T-cell (primary cell): ENCODE measurements at regions of chr17 and their contacts with region 1.

Region 1: GRCh38 chr17:68161644-68162428 is 86.0 kb upstream of the AMZ2 start:
- DNase-seq: no peak
- ATAC-seq: no peak
- H3K4me3 ChIP-seq: no peak overlapping the region
- H3K4me3 Mint-ChIP-seq: no peak overlapping the region
- H3K27ac ChIP-seq: no peak overlapping the region
- H3K27ac Mint-ChIP-seq: no peak overlapping the region
- H3K4me1 ChIP-seq: peaks cover 0 to 2% of the 10 kb centered on the region in 2 experiments
- H3K4me1 Mint-ChIP-seq: peaks cover 0 to 7% (median 6%) of the 10 kb centered on the region in 3 donors
- H3K27me3 ChIP-seq: no peaks in the 10 kb centered on the region
- H3K27me3 Mint-ChIP-seq: no peaks in the 10 kb centered on the region

Region 2: DNA sequence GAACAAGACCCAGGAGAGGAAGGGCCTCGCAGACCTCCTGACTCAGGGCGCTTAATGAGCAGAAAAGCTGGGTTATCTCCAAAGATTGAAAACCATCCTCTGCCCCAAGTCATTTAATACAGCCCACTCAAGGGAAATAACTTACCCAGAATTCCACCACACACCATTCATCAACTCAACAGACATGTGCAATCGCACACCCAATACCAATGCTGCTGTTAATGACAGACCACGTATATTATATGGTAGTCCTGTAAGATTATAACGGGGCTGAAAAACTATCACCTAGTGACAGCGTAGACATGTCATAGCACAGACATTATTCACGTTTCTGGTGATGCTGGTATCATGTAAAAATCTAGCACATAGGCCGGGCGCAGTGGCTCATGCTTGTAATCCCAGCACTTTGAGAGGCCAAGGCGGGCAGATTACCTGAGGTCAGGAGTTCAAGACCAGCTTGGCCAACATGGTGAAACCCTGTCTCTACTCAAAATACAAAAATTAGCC is 864.3 kb before region 1 on chr17:
- CTCF ChIA-PET with region 1: no interaction called
- POLR2A ChIA-PET with region 1: no interaction called
- DNase-seq: no peak
- ATAC-seq: no peak
- H3K4me3 ChIP-seq: no peak overlapping the region
- H3K4me3 Mint-ChIP-seq: no peak overlapping the region
- H3K27ac ChIP-seq: no peak overlapping the region
- H3K27ac Mint-ChIP-seq: no peak overlapping the region
- H3K4me1 ChIP-seq: peaks cover 0 to 8% of the 10 kb centered on the region in 2 experiments
- H3K4me1 Mint-ChIP-seq: peaks cover 0 to 6% (median 0%) of the 10 kb centered on the region in 3 donors
- H3K27me3 ChIP-seq: peaks cover 0 to 2% of the 10 kb centered on the region in 2 experiments
- H3K27me3 Mint-ChIP-seq: no peaks in the 10 kb centered on the region

Region 3: DNA sequence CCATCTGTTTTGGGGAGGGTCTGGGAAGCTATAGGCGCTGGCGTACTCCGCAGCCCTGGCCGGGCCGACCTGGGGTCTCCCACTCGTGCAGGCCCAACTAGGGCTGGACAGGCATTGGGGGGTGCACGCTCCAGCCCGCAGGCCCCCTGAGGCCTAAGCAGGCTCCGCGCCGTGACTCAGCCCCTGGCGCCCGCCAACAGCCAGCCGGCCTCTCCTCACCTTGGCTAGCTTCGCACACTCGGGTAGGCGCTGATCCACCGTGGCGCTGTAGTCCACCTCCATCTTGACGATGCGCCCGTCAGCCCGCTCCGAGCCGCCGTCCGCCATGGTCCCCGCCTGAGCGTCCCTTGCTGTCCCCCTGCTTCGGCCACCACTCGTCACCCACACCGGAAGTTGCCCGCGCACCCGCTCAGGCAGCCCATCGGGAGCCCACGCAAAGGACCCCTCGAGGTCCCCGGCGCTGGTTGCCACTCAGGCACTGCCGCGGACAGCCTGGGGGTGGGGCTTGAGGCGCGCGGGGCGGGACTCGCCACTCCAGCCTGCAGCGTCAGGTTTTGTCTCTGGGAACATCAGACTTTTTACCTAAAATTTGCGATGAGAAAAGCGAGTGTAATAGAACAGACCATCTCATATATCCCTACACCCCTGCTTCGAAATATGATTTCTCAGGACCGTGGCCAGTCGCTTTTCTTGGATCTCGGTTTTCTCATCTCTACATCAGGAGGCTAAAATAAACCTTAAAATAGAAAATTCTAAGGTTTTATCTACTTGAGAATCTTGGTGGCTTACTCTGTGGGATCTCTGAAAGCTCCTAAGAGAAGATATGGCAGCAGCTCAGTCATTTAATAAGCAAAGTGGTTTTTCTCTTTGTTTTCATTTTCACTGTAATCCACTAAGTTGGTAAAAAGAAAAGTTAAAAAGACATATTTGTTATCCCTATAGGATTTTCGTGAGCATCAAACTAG is 795.4 kb before region 1 on chr17 and contains the start of gene PSMD12:
- CTCF ChIA-PET with region 1: interaction called in 1 of 2 experiments, 13 read pairs
- POLR2A ChIA-PET with region 1: no interaction called
- DNase-seq: peak; percentile 82 to 96 (median 89)
- ATAC-seq: peak; percentile 97 to 99 (median 98)
- H3K4me3 ChIP-seq: peak within 1 kb of the TSS; percentile 94 to 97
- H3K4me3 Mint-ChIP-seq: peak within 1 kb of the TSS; percentile 87 to 96 (median 92)
- H3K27ac ChIP-seq: peak within 1 kb of the TSS; percentile 94
- H3K27ac Mint-ChIP-seq: peak within 1 kb of the TSS; percentile 96 to 98
- H3K4me1 ChIP-seq: peaks cover 14 to 24% of the 10 kb centered on the region in 2 experiments
- H3K4me1 Mint-ChIP-seq: peaks cover 46 to 52% (median 48%) of the 10 kb centered on the region in 3 donors
- H3K27me3 ChIP-seq: no peaks in the 10 kb centered on the region
- H3K27me3 Mint-ChIP-seq: no peaks in the 10 kb centered on the region
- total RNA-seq, gene PSMD12: 28.1 to 49.9 (median 37.7) TPM

Region 4: DNA sequence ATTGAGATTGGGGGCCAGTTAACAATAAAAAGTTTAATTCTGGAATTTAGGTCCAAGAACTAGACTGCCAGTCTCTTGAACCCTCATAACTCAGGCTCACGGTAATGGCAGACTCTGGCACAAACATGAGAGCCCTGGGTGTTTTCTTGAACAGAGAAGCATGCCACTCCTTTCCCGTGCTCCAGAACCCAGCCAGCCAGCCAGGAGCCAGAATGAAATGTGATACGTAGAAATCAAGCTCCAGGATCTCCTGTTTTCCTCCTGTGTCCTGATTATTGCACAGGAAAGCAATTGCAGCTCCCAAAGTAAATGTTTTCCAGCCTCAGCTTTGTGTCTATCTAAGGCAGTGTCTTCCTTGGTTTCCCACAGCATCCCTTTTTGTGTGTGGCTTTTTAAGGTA is 490.3 kb before region 1 on chr17:
- CTCF ChIA-PET with region 1: no interaction called
- POLR2A ChIA-PET with region 1: no interaction called
- DNase-seq: no peak
- ATAC-seq: no peak
- H3K4me3 ChIP-seq: no peak overlapping the region
- H3K4me3 Mint-ChIP-seq: no peak overlapping the region
- H3K27ac ChIP-seq: no peak overlapping the region
- H3K27ac Mint-ChIP-seq: peak overlapping the region in 1 of 2 donors; percentile 44
- H3K4me1 ChIP-seq: no peaks in the 10 kb centered on the region
- H3K4me1 Mint-ChIP-seq: peaks cover 0 to 1% (median 0%) of the 10 kb centered on the region in 3 donors
- H3K27me3 ChIP-seq: no peaks in the 10 kb centered on the region
- H3K27me3 Mint-ChIP-seq: no peaks in the 10 kb centered on the region

Region 5: GRCh38 chr17:68660302-68660701 is 498.5 kb after region 1 on chr17:
- CTCF ChIA-PET with region 1: no interaction called
- POLR2A ChIA-PET with region 1: interaction called in 1 of 2 experiments, 11 read pairs
- DNase-seq: no peak
- ATAC-seq: no peak
- H3K4me3 ChIP-seq: no peak overlapping the region
- H3K4me3 Mint-ChIP-seq: no peak overlapping the region
- H3K27ac ChIP-seq: no peak overlapping the region
- H3K27ac Mint-ChIP-seq: no peak overlapping the region
- H3K4me1 ChIP-seq: no peaks in the 10 kb centered on the region
- H3K4me1 Mint-ChIP-seq: no peaks in the 10 kb centered on the region
- H3K27me3 ChIP-seq: peaks cover 0 to 2% of the 10 kb centered on the region in 2 experiments
- H3K27me3 Mint-ChIP-seq: peaks cover 12 to 24% of the 10 kb centered on the region in 2 donors